PC-9 (cell line): ENCODE measurements at regions of chr2 and their contacts with region 1.

Region 1: DNA sequence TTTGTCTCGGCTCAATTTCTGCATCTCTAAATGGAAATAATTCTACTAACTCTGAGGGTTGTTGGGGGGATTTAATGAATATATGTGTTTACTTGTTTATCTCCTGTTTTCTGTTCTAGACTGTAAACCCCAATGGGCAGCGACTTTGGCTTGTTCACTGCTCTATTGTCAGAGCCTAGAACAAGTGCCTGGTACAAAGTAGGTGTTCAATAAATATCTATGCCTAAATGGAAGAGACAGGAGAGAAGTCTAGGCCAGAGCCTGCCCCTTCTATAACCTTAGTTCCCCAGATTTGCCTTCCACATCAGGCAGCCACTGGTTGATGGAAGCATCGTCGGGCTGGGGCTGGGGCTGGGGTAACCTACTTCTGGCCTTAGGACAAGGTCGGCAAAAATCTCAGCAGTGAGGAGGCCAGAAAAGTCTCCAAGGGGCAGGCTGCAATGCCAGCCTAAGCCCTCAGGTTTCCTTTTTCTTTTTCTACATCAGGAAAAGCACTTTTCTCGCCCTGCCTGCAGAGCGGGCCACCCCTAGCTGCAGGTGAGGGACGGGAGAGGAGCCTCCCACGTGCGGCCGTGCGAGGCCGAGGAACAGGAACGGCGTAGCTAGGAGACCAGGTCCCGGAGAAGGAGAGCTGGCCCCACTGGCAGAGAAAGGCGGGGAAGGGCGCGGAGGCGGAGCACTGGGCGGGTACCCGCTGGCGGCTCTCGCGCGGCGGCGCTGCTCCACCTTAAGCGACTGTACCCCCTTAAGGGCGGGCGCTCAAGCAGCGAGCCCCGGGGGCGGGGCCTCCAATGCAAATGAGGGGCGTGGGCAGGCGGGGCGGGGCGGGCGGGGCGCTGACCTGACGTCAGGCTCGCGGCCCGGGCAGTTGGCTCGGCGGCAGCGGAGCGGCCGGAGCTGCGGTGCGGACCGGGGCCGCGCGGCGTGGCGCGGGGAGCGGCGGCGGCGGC is at the start of gene CNNM4:
- DNase-seq: peak; percentile 90 to 98
- H3K4me3 ChIP-seq: peak within 1 kb of the TSS; percentile 87
- H3K27ac ChIP-seq: no peak within 1 kb of the TSS; the same call in 1 of the 2 replicates
- H3K4me1 ChIP-seq: peaks cover 47% of the 10 kb centered on the region
- H3K27me3 ChIP-seq: no peaks in the 10 kb centered on the region
- CTCF ChIP-seq: no peak
- total RNA-seq, gene CNNM4: 28.2 and 31.4 TPM in 2 replicates

Region 2: DNA sequence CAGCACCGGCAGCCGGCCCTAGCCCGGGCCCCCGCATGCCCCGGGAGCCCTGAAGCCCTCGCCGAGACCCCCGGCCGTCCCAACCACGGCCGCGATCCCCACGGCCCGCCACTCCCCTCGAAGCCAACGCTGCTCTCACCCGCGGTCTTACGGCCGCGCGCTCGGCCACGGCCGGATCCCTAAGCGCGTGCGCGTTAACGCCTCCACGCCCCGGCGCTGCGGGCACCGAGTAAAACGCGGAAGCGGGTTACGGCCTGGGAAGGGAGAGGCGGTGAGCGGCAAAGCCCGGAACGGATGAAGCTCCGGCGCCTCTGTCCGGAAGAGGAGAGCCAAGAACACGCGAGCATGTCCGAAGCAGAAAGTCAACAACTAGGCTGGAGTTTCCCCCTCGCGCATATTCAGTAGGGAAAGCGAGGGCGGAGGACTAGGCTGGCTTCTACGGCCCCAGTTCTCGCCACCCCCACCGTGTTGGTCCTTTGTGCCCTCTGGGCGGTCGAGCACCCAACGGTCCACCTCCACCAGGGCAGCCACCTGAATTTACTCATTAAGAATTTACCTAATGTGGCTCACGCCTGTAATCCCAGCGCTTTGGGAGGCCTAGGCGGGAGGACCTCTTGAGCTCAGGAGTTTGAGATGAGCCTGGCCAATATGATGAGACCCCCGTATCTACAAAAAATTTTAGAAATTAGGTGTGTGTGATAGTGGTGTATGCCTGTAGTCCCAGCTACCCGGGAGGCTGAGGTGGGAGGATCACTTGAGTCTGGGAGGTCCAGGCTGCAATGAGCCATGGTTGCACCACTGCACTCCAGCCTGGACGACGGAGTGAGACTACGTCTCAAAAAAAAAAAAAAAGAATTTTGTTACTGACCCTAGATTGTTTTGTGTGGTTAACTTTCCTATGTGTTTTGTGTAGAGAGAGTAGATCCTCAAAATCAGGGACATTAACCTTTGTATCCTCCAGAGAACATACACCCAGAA is 121.9 kb before region 1 on chr2 and contains the start of gene KANSL3:
- CTCF ChIA-PET with region 1: no interaction called
- POLR2A ChIA-PET with region 1: interaction called, 11 read pairs
- intact Hi-C with region 1: loop called (anchors 5 kb)
- DNase-seq: peak; percentile 81 to 94
- H3K4me3 ChIP-seq: peak within 1 kb of the TSS; percentile 96
- H3K27ac ChIP-seq: peak within 1 kb of the TSS; percentile 76
- H3K4me1 ChIP-seq: peaks cover 38% of the 10 kb centered on the region
- H3K27me3 ChIP-seq: no peaks in the 10 kb centered on the region
- CTCF ChIP-seq: no peak
- total RNA-seq, gene KANSL3: 52.0 and 53.8 TPM in 2 replicates

Region 3: GRCh38 chr2:96679848-96680247 is 80.5 kb before region 1 on chr2:
- CTCF ChIA-PET with region 1: no interaction called
- POLR2A ChIA-PET with region 1: no interaction called
- intact Hi-C with region 1: no loop called
- DNase-seq: no peak
- H3K4me3 ChIP-seq: no peak overlapping the region
- H3K27ac ChIP-seq: no peak overlapping the region
- H3K4me1 ChIP-seq: no peaks in the 10 kb centered on the region
- H3K27me3 ChIP-seq: no peaks in the 10 kb centered on the region
- CTCF ChIP-seq: no peak

Region 4: GRCh38 chr2:96739633-96740428 is 20.5 kb before region 1 on chr2 and contains the start of gene LMAN2L:
- CTCF ChIA-PET with region 1: no interaction called
- POLR2A ChIA-PET with region 1: no interaction called
- intact Hi-C with region 1: loop called (anchors 1 kb)
- DNase-seq: peak; percentile 95 to 98
- H3K4me3 ChIP-seq: peak within 1 kb of the TSS; percentile 77
- H3K27ac ChIP-seq: no peak within 1 kb of the TSS
- H3K4me1 ChIP-seq: peaks cover 18% of the 10 kb centered on the region
- H3K27me3 ChIP-seq: no peaks in the 10 kb centered on the region
- CTCF ChIP-seq: no peak
- total RNA-seq, gene LMAN2L: 13.2 and 15.6 TPM in 2 replicates

Region 5: GRCh38 chr2:96801005-96801785 is 40.9 kb after region 1 on chr2:
- CTCF ChIA-PET with region 1: interaction called, 11 read pairs
- POLR2A ChIA-PET with region 1: no interaction called
- intact Hi-C with region 1: loop called (anchors 2 kb)
- DNase-seq: peak; percentile 65 to 80
- H3K4me3 ChIP-seq: no peak overlapping the region
- H3K27ac ChIP-seq: no peak overlapping the region
- H3K4me1 ChIP-seq: no peaks in the 10 kb centered on the region
- H3K27me3 ChIP-seq: no peaks in the 10 kb centered on the region
- CTCF ChIP-seq: peak; percentile 97

Region 6: DNA sequence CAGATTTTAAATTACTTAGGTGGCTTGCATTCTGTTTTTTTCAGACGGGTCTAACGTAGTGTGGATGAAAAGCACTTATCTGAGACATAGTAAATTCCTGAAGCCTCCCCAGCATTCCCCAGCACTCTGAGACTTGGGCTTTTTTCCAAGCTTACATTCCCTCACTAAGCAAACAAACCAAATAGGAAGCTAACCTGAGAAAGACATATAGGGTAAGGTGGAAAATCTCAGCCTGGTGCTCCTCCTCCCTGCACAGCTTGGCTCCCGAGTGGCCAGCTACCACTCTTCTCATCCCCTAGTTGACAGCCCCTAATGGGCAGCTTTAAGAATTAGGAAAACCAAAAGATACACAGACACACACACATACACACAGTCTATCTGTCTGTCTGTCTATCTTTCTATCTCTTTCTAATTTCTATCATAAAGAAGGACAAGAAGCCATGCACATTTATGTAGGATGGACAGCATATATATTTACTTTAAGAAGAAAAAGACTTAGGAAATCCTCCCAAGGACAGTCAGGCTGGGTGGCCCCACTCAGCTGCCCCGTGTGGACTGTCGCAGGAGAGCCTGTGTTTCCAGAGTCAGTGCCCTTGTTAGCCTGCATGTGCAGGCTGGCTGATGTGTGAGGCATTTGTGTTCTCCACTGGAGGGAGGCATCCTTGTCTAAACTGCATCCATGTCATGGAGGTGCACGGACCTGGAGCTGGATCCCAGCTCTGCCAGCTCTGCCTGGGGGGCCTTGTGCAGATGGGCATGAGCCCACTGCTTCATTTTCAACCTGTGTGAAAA is 64.0 kb after region 1 on chr2:
- CTCF ChIA-PET with region 1: no interaction called
- POLR2A ChIA-PET with region 1: interaction called, 23 read pairs
- intact Hi-C with region 1: no loop called
- DNase-seq: no peak
- H3K4me3 ChIP-seq: no peak overlapping the region
- H3K27ac ChIP-seq: no peak overlapping the region
- H3K4me1 ChIP-seq: peaks cover 10% of the 10 kb centered on the region; the same call in 1 of the 2 replicates
- H3K27me3 ChIP-seq: no peaks in the 10 kb centered on the region
- CTCF ChIP-seq: no peak